Activated CD4-positive, alpha-beta T cell treated with anti-CD3 and anti-CD28 coated beads, Interleukin-2, amount 10 ng/mL, durations not matched to agents 24 days and 14 days (primary cell): ENCODE measurements at regions of chrX and their contacts with region 1.

Region 1: DNA sequence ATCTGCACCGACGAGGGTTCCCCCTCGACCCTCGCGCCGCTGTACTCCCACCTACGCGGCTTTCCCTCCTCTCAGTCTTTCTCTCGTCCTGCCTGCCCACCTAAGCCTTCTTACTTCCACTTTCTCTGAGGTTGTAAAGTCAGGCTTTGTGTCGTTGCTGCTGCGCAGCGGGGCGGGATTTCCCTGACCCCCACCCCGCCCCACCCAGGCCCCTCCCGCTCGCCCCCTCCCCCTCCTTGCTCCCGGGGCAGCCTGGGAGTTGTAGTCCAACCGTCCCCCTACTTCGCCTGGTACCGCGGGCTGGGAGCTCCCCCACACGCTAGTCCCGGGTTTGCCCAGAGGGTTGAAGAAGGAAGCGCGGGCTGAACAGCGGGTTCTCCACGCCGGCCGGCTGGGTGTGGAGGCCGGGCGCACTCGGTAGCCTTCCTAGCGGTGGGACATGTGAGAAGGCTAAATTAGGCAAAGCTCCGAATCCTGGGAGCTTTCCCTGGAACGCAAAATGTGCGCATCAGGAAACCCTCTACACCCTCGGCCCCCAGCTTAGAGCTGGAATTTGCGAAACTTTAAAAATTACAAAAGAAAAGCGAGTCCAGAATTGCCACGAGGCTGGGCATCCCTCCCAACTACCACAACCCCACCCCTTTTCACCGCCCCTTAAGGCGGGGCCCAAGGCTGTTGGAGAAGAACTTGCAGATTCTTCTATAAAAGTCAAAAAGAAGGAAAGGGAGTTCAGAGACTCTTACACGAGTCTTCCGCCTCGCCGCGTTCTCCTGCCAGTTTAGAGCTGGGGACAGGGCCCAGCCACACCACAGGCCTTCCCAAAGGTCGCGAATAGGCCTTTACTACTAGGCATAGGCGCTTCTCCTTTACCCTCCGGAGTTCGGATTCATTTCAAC is at the start of gene ATP11C:
- DNase-seq: peak; percentile 92
- H3K4me3 Mint-ChIP-seq: peak within 1 kb of the TSS; percentile 86
- H3K27ac Mint-ChIP-seq: peak within 1 kb of the TSS; percentile 96
- H3K4me1 Mint-ChIP-seq: peaks cover 17% of the 10 kb centered on the region
- H3K27me3 Mint-ChIP-seq: no peaks in the 10 kb centered on the region
- total RNA-seq, gene ATP11C: 20.0 and 21.8 TPM in 2 replicates

Region 2: GRCh38 chrX:139739138-139739537 is 194.0 kb before region 1 on chrX:
- intact Hi-C with region 1: loop called (anchors 2 kb)
- DNase-seq: peak; percentile 71
- H3K4me3 Mint-ChIP-seq: peak overlapping the region; percentile 29
- H3K27ac Mint-ChIP-seq: peak overlapping the region; percentile 65
- H3K4me1 Mint-ChIP-seq: peaks cover 16% of the 10 kb centered on the region
- H3K27me3 Mint-ChIP-seq: no peaks in the 10 kb centered on the region

Region 3: GRCh38 chrX:139766545-139766983 is 166.6 kb before region 1 on chrX:
- intact Hi-C with region 1: loop called (anchors 1 kb)
- DNase-seq: peak; percentile 83
- H3K4me3 Mint-ChIP-seq: no peak overlapping the region
- H3K27ac Mint-ChIP-seq: no peak overlapping the region
- H3K4me1 Mint-ChIP-seq: peaks cover 2% of the 10 kb centered on the region
- H3K27me3 Mint-ChIP-seq: no peaks in the 10 kb centered on the region

Region 4: GRCh38 chrX:139795196-139795595 is 138.0 kb before region 1 on chrX:
- intact Hi-C with region 1: loop called (anchors 1 kb)
- DNase-seq: peak; percentile 53
- H3K4me3 Mint-ChIP-seq: no peak overlapping the region
- H3K27ac Mint-ChIP-seq: peak overlapping the region; percentile 73
- H3K4me1 Mint-ChIP-seq: peaks cover 5% of the 10 kb centered on the region
- H3K27me3 Mint-ChIP-seq: no peaks in the 10 kb centered on the region

Region 5: DNA sequence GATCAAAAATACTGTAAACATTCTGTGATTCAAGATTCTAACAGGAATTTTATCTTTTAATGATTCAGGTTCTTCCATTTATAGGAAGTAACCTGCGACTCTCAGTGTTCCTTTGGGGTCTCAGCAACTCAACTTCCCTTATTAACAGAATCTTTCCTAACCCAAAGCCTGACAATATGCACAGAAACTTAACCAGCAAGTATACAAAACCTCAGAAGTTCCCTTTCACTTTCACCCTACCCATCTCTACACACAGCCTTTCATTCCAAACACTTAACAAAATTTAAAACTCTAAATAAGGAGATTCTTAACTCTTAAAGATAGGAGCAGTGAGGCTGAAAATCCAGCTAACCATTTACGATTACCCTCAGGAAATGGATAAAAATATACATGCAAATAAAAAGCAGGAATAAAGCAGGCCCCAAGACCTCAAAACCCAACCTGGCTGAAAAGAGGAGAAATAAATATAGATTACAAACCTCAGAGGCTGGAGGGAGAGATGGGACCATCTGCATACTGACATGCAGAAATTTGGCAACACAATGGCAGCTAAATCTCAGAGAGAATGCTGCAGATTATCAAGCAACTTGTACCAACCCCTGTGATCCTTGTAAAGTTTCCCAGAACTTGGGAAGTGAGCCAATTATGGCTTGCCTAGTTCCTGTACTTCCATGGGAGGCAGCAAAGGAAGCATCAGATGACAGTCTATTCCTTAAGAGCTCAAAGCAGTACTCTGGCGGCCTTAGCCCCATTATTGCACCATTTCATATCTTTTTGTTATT is 101.3 kb before region 1 on chrX:
- intact Hi-C with region 1: loop called (anchors 5 kb)
- DNase-seq: no peak
- H3K4me3 Mint-ChIP-seq: peak overlapping the region; percentile 39
- H3K27ac Mint-ChIP-seq: no peak overlapping the region
- H3K4me1 Mint-ChIP-seq: peaks cover 11% of the 10 kb centered on the region
- H3K27me3 Mint-ChIP-seq: no peaks in the 10 kb centered on the region

Region 6: DNA sequence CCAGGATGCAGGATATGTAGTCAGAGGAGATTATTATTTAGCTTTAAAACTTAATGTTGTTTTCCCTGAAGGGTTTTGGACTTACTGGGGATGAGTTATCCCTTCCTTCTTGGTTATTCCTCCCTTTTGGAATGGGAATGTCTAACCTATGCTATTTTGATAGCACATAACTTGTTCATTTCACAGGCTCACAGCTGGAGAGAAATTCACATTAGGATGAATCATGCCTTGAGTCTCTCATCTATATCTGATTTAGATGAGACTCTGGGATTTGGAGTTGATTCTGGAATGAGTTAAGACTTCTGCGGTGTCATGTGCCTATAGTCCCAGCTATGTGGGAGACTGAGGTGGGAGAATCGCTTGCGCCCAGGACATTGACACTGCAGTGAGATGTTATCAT is 81.4 kb before region 1 on chrX:
- intact Hi-C with region 1: no loop called
- DNase-seq: no peak
- H3K4me3 Mint-ChIP-seq: no peak overlapping the region
- H3K27ac Mint-ChIP-seq: no peak overlapping the region
- H3K4me1 Mint-ChIP-seq: no peaks in the 10 kb centered on the region
- H3K27me3 Mint-ChIP-seq: no peaks in the 10 kb centered on the region

Region 7: DNA sequence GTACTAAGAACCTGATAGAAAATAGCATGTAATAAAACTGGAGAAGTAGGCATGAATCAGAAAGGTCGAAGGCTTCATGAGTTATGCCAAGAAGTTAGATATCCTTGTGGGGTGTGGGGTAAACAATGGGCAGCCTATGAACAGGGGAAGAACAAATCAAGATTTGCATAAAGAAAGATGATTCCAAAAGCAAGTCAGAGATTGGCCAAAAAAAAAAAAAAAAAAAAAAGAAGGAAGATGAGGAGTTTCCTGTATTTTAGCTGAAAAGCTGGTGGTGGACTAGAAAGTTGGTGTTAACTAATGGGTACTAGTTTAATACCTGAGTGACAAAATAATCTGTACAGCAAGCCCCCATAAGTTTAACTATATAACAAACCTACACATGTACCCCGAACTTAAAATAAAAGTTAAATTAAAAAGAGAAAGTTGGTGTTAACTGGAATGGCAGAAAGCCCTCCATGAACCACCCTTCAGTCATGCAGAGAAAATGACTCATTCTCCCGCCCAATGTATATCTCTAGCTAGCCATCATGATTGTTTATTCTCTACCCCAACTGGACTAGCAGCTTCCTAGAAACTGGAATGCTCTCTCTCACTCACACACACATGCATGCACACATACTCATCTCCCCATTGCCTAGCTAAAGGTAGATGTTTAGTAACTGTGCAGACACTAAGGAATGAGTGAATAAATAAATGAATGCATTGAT is 42.0 kb before region 1 on chrX:
- intact Hi-C with region 1: loop called (anchors 5 kb)
- DNase-seq: no peak
- H3K4me3 Mint-ChIP-seq: no peak overlapping the region
- H3K27ac Mint-ChIP-seq: no peak overlapping the region
- H3K4me1 Mint-ChIP-seq: peaks cover 2% of the 10 kb centered on the region
- H3K27me3 Mint-ChIP-seq: no peaks in the 10 kb centered on the region